ENCODE measurements at regions of chr18 and their contacts with region 1.

Region 1: DNA sequence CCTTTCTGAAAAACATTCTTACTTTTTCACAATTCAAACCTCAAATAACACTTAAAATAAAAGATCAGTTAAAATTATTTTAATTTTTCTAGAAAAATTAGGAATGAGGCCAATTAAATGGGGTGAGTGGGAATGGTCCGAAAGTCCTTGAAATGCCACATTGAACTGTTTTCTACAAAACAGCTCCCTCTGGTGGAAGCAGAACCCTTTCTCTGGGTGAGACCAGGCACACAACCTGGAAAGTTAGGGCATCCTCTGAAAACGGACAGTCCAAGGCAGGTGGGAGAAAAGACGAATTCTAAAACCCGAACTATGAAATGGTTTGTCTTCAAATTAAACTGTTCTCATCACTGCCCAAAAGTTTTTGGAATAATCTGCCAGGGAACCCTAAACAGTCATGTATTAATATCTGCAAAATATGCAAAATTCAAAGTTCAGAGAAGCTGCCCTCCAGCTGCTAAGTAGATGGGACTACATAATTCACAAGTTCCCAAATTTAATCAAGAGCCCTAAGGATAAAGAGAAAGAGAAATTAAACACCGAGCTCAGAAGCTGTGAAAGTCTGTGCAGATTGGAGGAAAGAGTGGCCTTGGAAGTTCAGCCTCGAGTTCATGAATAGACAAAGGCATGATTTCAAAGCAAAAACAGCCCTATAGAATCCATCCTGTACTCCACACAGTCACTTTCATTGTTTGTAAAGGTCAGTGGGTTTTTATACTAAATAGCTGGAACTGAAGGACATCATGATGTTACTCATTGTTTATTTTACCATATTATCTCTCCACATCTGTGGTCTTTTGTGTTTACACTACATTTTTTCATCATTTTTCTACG is 108.3 kb downstream of the PIEZO2 start:
- DNase-seq: peak; percentile 50
- CTCF ChIP-seq: peak; percentile 77

Region 2: GRCh38 chr18:10787293-10787901 is 253.6 kb before region 1 on chr18:
- CTCF ChIA-PET with region 1: interaction called, 19 read pairs
- POLR2A ChIA-PET with region 1: no interaction called
- DNase-seq: peak; percentile 71
- CTCF ChIP-seq: peak; percentile 77

Region 3: DNA sequence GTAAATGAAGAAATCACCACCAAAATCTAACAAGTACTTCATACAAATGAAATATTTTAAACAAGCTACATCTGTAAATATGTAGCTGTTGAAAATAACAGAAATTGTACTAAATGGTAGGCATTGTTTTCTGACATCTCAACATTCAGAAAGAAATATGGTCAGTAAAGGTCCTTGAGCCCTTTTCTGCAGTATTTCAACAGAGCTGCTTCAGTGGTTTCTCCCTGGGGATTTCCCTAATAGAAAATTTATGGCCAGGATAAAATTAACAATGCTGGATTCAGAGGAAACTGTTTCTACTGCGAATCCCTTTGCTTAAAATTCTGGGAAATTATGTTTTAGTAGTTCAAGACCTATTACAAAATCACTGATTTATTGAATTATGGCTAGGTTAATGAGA is 148.3 kb before region 1 on chr18:
- CTCF ChIA-PET with region 1: interaction called, 18 read pairs
- POLR2A ChIA-PET with region 1: no interaction called
- DNase-seq: no peak
- CTCF ChIP-seq: no peak

Region 4: GRCh38 chr18:11020877-11021414 is 20.1 kb before region 1 on chr18:
- CTCF ChIA-PET with region 1: interaction called, 118 read pairs
- POLR2A ChIA-PET with region 1: no interaction called
- DNase-seq: no peak
- CTCF ChIP-seq: no peak

Region 5: GRCh38 chr18:11052800-11053199 is 11.8 kb after region 1 on chr18:
- CTCF ChIA-PET with region 1: interaction called, 30 read pairs
- POLR2A ChIA-PET with region 1: no interaction called
- DNase-seq: no peak
- CTCF ChIP-seq: no peak

Region 6: DNA sequence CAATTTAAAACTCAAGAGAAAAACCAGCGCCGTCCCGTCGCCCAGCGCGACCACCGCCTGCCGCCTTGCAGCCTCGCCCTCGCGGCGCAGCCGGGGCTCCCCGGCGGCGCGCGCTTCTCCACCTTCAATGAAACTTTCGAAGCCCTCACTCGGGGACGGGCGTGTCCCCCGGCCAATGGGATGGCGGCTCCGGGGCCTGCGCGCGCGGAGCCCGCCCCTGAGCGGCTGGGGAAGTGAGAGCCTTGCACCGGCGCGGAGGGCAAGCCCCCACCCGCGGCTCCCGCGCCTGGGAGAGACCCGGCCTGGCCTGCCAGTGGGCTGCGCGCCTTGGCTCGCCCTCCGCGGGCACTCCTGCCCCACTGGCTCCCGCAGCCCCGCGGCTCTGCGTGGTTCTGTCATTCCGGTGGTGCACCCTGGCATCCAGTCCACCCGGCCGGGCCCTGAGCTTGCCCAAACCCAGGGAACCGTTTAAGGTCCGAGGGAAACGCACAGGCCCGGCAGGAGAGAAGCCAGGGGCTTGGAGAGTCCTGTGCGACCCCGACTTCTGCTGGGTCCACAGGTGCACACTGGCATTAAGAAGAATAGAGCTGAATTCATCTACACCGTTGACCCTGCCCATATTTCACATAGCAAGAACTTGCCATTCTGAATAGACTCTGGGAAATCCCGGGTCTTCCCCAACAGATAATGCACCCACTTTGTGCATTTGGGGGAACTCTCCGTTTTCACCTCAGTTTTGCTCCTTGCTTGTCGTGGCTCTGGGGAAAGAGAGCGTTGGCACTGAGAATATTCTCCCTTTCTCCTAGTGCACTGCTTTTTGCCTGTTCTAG is 108.6 kb after region 1 on chr18 and contains the start of gene PIEZO2:
- CTCF ChIA-PET with region 1: interaction called, 17 read pairs
- POLR2A ChIA-PET with region 1: no interaction called
- DNase-seq: peak; percentile 92
- CTCF ChIP-seq: no peak